ENCODE measurements at regions of chr1 and their contacts with region 1.

Region 1: GRCh38 chr1:161726596-161727457 is 5.5 kb downstream of the FCRLB start:
- DNase-seq: peak; percentile 81
- ATAC-seq: peak; percentile 78
- H3K4me3 Mint-ChIP-seq: peak overlapping the region; percentile 90
- H3K27ac Mint-ChIP-seq: no peak overlapping the region
- H3K4me1 Mint-ChIP-seq: peaks cover 34% of the 10 kb centered on the region
- H3K27me3 Mint-ChIP-seq: peaks cover 67% of the 10 kb centered on the region
- CTCF ChIP-seq: no peak

Region 2: GRCh38 chr1:161676958-161677689 is 49.7 kb before region 1 on chr1:
- CTCF ChIA-PET with region 1: no interaction called
- POLR2A ChIA-PET with region 1: no interaction called
- DNase-seq: no peak
- ATAC-seq: peak; percentile 38; the same call in 1 of the 2 replicates
- H3K4me3 Mint-ChIP-seq: no peak overlapping the region
- H3K27ac Mint-ChIP-seq: no peak overlapping the region; the same call in 1 of the 2 replicates
- H3K4me1 Mint-ChIP-seq: peaks cover 15% of the 10 kb centered on the region
- H3K27me3 Mint-ChIP-seq: no peaks in the 10 kb centered on the region
- CTCF ChIP-seq: no peak

Region 3: GRCh38 chr1:161749509-161750407 is 22.9 kb after region 1 on chr1 and contains the start of gene DUSP12:
- CTCF ChIA-PET with region 1: interaction called, 6 read pairs
- POLR2A ChIA-PET with region 1: interaction called, 10 read pairs
- DNase-seq: peak; percentile 95
- ATAC-seq: peak; percentile 97
- H3K4me3 Mint-ChIP-seq: peak within 1 kb of the TSS; percentile 99
- H3K27ac Mint-ChIP-seq: peak within 1 kb of the TSS; percentile 99
- H3K4me1 Mint-ChIP-seq: peaks cover 15% of the 10 kb centered on the region
- H3K27me3 Mint-ChIP-seq: peaks cover 9% of the 10 kb centered on the region
- CTCF ChIP-seq: no peak
- total RNA-seq, gene DUSP12: 24.5 to 29.4 TPM (median 27.6 TPM) in 3 replicates